Mammary epithelial cell (primary cell): ENCODE measurements at regions of chr10 and their contacts with region 1.

Region 1: DNA sequence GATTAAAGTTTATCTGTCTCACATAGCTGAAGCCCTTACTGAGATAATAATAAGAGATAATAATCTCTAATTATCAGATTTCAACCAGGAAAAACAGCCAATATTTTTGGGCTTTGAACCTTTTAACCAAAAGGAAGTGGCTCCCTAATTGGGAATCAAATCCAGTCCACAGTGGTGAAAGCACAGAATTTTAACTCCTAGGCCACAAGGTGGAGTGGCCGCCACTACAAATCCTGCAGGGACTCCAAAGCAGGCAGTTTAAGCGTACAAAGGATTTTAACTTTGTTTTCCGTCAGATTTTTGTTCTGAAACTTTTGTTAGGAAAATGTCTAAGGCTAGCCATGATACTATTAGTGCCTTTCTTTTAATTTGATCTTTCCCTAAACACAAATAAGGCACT is 99.6 kb upstream of the CCNY start:
- DNase-seq: no peak
- H3K4me3 ChIP-seq: no peak overlapping the region
- H3K27ac ChIP-seq: no peak overlapping the region
- H3K4me1 ChIP-seq: no peaks in the 10 kb centered on the region
- H3K27me3 ChIP-seq: no peaks in the 10 kb centered on the region
- CTCF ChIP-seq: peak in 1 of 2 donors; percentile 48

Region 2: DNA sequence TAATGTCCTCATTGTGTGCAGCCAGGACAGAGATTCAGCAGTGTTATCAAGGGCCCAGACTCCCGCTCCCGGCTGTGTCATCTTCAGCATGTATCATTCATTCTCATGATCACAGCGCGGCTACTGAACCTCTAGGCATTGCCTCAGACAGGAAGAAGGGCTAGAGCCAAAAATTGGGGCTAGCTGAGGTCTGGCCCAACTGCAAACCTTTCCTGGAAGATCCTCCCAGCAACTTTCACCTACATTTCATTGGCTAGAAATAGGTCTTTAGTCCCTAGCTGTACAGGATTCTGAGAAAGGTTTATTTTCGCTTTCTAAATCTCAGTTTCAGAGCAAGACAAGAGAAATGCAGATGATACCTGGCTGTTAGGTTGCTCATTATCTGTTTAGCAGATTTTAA is 28.2 kb before region 1 on chr10:
- CTCF ChIA-PET with region 1: no interaction called
- dilution Hi-C with region 1: no loop called
- in situ Hi-C with region 1: no loop called
- intact Hi-C with region 1: no loop called
- DNase-seq: no peak
- H3K4me3 ChIP-seq: no peak overlapping the region
- H3K27ac ChIP-seq: no peak overlapping the region
- H3K4me1 ChIP-seq: no peaks in the 10 kb centered on the region
- H3K27me3 ChIP-seq: no peaks in the 10 kb centered on the region
- CTCF ChIP-seq: no peak

Region 3: DNA sequence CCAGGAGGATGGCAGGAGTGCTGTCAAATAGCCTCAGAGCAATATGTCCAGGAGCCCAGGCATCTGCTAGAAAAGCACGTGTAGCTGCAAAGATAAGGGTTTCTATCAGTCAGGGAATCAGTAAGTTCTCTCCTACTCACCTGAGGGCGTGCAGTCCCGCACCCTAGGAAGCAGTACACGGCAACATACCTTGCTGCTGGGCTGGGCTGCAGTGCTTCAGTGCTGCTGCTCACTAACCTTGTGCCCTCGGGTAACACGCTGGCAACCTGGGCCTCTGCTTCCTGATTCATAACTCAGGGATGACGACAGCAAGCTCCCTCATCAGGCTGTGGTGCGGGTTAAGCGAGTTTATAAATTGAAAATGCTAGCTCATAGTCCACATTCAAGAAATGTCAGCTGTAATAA is 70.1 kb after region 1 on chr10:
- CTCF ChIA-PET with region 1: interaction called, 4 read pairs
- dilution Hi-C with region 1: no loop called
- in situ Hi-C with region 1: no loop called
- intact Hi-C with region 1: loop called (anchors 1 kb)
- DNase-seq: peak; percentile 95
- H3K4me3 ChIP-seq: peak overlapping the region; percentile 10 to 25 (median 17)
- H3K27ac ChIP-seq: peak overlapping the region; percentile 97
- H3K4me1 ChIP-seq: peaks cover 12% of the 10 kb centered on the region
- H3K27me3 ChIP-seq: no peaks in the 10 kb centered on the region
- CTCF ChIP-seq: no peak

Region 4: DNA sequence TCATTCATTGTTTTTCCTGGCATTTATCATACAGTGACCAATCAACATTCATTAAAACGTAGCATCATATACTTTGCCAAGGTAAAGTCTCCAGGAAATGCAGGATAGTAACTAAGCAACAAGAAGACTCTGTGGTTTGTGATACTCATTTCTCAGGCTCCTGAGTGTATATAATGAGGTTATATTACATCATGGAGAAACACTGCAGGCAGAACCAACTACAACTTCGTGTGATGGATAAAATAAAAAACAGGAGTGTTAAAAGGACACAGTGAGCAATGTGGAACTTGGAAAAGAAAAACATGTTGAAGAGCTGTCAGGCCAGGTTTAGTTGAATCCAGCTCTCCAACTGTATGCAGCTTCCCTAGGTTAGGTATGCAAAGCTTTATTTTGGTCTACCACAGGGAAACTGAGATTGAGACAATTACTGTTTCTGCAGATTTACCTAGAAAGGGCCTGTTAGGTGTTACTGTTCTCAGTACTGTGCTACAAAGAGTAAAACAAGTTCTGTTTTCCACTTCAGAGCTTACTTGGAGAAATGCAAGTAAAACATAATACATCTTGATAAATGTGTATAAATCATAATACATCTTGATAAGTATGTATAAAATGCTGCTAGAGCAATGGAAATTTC is 91.8 kb after region 1 on chr10:
- CTCF ChIA-PET with region 1: no interaction called
- dilution Hi-C with region 1: no loop called
- in situ Hi-C with region 1: no loop called
- intact Hi-C with region 1: no loop called
- DNase-seq: peak; percentile 80
- H3K4me3 ChIP-seq: no peak overlapping the region
- H3K27ac ChIP-seq: peak overlapping the region; percentile 52
- H3K4me1 ChIP-seq: peaks cover 22% of the 10 kb centered on the region
- H3K27me3 ChIP-seq: no peaks in the 10 kb centered on the region
- CTCF ChIP-seq: no peak

Region 5: GRCh38 chr10:35347121-35347562 is 110.4 kb after region 1 on chr10:
- CTCF ChIA-PET with region 1: interaction called, 20 read pairs
- dilution Hi-C with region 1: no loop called
- in situ Hi-C with region 1: no loop called
- intact Hi-C with region 1: no loop called
- DNase-seq: no peak
- H3K4me3 ChIP-seq: no peak overlapping the region
- H3K27ac ChIP-seq: no peak overlapping the region
- H3K4me1 ChIP-seq: no peaks in the 10 kb centered on the region
- H3K27me3 ChIP-seq: no peaks in the 10 kb centered on the region
- CTCF ChIP-seq: no peak

Region 6: DNA sequence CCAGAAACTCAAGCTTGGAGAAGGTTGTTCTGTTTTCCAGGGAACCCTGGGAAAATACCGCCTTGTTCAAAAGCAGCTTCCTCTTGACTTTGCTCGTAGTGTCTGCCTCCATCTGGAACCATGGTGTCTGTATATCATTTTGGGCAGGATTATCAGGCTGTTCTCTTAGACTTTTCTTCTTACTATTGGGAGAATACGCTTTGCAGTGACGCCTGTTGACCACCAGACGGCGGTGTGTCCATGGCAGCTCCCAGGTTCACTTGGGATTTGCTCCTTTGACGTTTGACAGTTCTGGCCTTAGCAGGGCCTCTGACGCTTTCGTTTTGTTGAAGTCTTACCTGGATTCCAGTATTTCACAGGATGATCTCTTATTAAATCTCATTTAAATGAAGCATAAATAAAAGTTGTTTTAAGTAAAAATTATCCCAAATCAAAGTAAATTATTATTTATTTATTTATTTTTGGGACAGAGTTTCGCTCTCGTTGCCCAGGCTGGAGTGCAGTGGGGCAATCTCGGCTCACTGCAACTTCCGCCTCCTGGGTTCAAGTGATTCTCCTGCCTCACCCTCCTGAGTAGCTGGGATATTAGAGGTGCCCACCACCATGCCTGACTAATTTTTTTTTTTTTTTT is 326.6 kb after region 1 on chr10:
- CTCF ChIA-PET with region 1: no interaction called
- dilution Hi-C with region 1: no loop called
- in situ Hi-C with region 1: loop called in 1 of 2 experiments (anchors 25 kb)
- intact Hi-C with region 1: loop called (anchors 2 kb)
- DNase-seq: peak; percentile 45
- H3K4me3 ChIP-seq: no peak overlapping the region
- H3K27ac ChIP-seq: no peak overlapping the region
- H3K4me1 ChIP-seq: no peaks in the 10 kb centered on the region
- H3K27me3 ChIP-seq: no peaks in the 10 kb centered on the region
- CTCF ChIP-seq: peak; percentile 99 to 100

Region 7: DNA sequence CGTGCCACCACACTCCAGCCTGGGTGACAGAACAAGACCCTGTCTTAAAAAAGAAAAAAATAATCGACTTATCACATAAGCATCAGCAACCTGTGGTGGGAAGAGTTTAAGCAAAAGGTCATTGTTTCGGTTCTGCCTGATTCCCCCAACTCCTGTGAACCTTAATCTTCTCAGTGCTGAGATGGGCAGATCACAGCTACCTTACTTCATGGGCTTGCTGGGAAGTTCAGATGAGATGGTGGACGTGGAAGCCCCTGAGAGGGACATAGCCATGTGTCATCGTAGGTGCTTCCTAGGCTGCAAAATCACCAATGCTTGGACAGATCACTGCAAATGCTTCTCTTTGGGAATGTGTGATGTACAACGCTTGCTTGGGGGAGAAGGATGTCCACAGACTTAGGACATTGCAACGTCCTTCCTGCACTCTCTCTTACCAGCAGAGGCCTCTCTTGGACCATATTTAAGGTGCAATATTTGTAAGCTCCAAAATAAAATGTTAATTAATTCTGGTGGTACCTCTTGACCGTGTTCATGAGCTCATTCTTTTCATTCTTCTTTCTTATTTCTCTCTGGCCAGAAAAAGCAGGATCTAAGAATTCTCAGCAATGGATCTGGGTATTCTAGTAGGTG is 377.0 kb after region 1 on chr10:
- CTCF ChIA-PET with region 1: no interaction called
- dilution Hi-C with region 1: no loop called
- in situ Hi-C with region 1: no loop called
- intact Hi-C with region 1: loop called (anchors 5 kb)
- DNase-seq: no peak
- H3K4me3 ChIP-seq: no peak overlapping the region
- H3K27ac ChIP-seq: no peak overlapping the region
- H3K4me1 ChIP-seq: no peaks in the 10 kb centered on the region
- H3K27me3 ChIP-seq: no peaks in the 10 kb centered on the region
- CTCF ChIP-seq: peak; percentile 36 to 58

Region 8: GRCh38 chr10:36888929-36889573 is 1652.3 kb after region 1 on chr10:
- CTCF ChIA-PET with region 1: no interaction called
- dilution Hi-C with region 1: no loop called
- in situ Hi-C with region 1: loop called in 1 of 2 experiments (anchors 25 kb)
- intact Hi-C with region 1: no loop called
- DNase-seq: peak; percentile 31
- H3K4me3 ChIP-seq: no peak overlapping the region
- H3K27ac ChIP-seq: no peak overlapping the region
- H3K4me1 ChIP-seq: no peaks in the 10 kb centered on the region
- H3K27me3 ChIP-seq: no peaks in the 10 kb centered on the region
- CTCF ChIP-seq: peak; percentile 34 to 36